HCT116 (cell line): ENCODE measurements at regions of chr2 and their contacts with region 1.

Region 1: DNA sequence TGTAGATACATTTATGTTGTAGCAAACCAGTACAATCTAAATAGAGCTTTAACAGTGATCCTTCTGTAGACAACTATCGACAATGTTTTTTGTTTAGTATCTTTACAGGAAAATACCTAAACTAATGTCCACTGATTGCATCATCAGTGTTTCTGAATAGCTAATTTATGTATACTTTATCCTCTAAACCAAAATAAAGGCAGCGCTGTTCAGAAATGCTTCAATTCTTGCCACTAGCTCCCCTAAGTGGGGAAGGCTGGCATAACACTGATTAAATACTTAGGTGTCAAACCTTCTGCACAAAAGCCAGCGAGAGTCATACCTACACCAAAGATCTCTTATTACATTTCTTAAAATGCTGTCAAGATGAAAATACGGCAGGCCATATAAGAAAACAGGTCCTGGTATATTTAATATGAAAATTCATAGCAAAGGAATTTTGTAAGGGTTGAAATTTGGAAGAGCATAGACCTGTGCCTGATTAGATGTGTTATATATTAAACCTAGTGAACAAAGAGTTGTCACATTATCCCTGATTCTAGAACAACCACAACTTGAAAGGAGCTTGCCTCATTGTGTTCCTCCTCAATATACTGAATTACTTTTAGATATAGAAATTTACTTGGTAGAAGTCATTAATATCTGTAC is 1693.4 kb upstream of the SLC39A10 start:
- DNase-seq: peak; percentile 36
- ATAC-seq: peak; percentile 84
- H3K4me3 ChIP-seq: no peak overlapping the region
- H3K27ac ChIP-seq: no peak overlapping the region
- H3K4me1 ChIP-seq: no peaks in the 10 kb centered on the region; a peak in 1 of 4 replicates
- H3K27me3 ChIP-seq: no peaks in the 10 kb centered on the region
- CTCF ChIP-seq: peak; percentile 61 to 77 (median 67)
- POLR2A ChIP-seq: no peak
- RAD21 ChIP-seq: peak; percentile 80

Region 2: DNA sequence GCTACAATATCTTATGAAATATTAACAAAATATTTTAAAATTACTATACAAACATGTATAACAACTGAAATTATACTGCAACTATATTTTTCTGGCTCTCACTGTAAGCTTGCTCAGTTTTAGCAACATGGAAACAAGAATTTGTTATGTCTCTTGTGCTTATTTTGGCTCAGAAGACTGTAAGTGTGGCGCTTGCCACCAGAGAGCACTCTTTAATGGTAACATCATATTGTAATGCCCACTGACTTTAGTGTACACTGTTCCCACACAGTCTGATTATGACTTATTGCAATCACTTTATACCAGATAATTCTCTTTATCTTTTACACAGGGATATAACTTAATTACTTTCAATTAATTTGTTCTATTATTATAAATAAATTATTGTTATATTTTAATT is 268.2 kb before region 1 on chr2:
- CTCF ChIA-PET with region 1: interaction called, 22 read pairs
- POLR2A ChIA-PET with region 1: no interaction called
- RAD21 ChIA-PET with region 1: no interaction called
- intact Hi-C with region 1: loop called (anchors 1 kb)
- DNase-seq: peak; percentile 22
- ATAC-seq: peak; percentile 86
- H3K4me3 ChIP-seq: no peak overlapping the region
- H3K27ac ChIP-seq: no peak overlapping the region
- H3K4me1 ChIP-seq: no peaks in the 10 kb centered on the region
- H3K27me3 ChIP-seq: no peaks in the 10 kb centered on the region
- CTCF ChIP-seq: peak; percentile 39 to 65 (median 55); a peak in 5 of 6 replicates
- POLR2A ChIP-seq: no peak
- RAD21 ChIP-seq: peak; percentile 68

Region 3: GRCh38 chr2:193895226-193895625 is 68.4 kb before region 1 on chr2:
- CTCF ChIA-PET with region 1: no interaction called
- POLR2A ChIA-PET with region 1: no interaction called
- RAD21 ChIA-PET with region 1: no interaction called
- intact Hi-C with region 1: no loop called
- DNase-seq: no peak
- ATAC-seq: no peak
- H3K4me3 ChIP-seq: no peak overlapping the region
- H3K27ac ChIP-seq: no peak overlapping the region
- H3K4me1 ChIP-seq: no peaks in the 10 kb centered on the region
- H3K27me3 ChIP-seq: no peaks in the 10 kb centered on the region
- CTCF ChIP-seq: no peak
- POLR2A ChIP-seq: no peak
- RAD21 ChIP-seq: no peak

Region 4: DNA sequence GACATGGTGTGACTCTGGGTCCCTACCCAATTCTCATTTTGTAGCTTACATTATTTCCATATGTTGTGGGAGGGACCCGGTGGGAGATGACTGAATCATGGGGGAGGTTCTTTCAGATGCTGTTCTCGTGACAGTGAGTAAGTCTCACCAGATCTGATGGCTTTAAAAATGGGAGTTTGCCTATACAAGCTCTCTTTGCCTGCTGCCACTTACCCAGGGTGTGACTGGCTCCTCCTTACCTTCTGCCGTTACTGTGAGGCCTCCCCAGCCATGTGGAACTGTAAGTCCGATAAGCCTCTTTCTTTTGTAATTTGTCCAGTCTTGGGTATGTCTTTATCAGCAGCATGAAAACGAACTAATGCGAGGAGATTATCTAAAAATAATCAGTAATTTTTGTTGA is 10.2 kb after region 1 on chr2:
- CTCF ChIA-PET with region 1: no interaction called
- POLR2A ChIA-PET with region 1: no interaction called
- RAD21 ChIA-PET with region 1: no interaction called
- intact Hi-C with region 1: no loop called
- DNase-seq: no peak
- ATAC-seq: no peak
- H3K4me3 ChIP-seq: no peak overlapping the region
- H3K27ac ChIP-seq: no peak overlapping the region
- H3K4me1 ChIP-seq: no peaks in the 10 kb centered on the region
- H3K27me3 ChIP-seq: no peaks in the 10 kb centered on the region
- CTCF ChIP-seq: no peak
- POLR2A ChIP-seq: no peak
- RAD21 ChIP-seq: no peak

Region 5: DNA sequence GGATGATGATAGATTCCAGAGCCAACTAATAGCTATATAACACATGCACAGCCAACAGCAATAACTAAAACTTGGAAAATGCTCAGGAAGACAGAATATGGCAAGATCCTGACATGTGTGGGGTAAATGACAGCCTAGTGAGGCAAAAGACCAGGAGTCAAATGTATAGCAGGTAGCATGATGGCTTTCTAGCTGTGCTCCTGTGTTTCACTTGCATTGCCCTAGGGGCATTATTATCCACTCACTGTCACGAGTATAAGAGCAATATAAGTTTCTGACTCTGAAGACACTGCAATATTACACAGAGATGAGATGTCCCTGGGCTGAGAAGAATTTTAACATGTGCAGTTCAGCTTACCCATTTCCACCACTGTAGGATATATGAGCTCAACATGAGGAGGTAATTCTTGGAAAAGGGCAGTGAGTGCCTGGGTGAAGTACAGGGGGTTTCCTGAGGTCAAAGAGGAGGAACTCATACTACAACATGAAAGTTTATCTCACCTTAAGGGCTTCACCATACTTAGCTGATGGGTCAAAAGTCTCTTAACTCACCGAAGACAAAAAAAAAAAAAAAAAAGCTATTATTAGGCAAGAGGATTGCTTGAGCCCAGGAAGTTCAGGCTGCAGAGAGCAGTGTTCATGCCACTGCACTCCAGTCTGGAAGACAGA is 307.8 kb after region 1 on chr2:
- CTCF ChIA-PET with region 1: no interaction called
- POLR2A ChIA-PET with region 1: no interaction called
- RAD21 ChIA-PET with region 1: no interaction called
- intact Hi-C with region 1: no loop called
- DNase-seq: no peak
- ATAC-seq: no peak
- H3K4me3 ChIP-seq: no peak overlapping the region
- H3K27ac ChIP-seq: no peak overlapping the region
- H3K4me1 ChIP-seq: no peaks in the 10 kb centered on the region
- H3K27me3 ChIP-seq: no peaks in the 10 kb centered on the region
- CTCF ChIP-seq: no peak
- POLR2A ChIP-seq: no peak
- RAD21 ChIP-seq: no peak

Region 6: DNA sequence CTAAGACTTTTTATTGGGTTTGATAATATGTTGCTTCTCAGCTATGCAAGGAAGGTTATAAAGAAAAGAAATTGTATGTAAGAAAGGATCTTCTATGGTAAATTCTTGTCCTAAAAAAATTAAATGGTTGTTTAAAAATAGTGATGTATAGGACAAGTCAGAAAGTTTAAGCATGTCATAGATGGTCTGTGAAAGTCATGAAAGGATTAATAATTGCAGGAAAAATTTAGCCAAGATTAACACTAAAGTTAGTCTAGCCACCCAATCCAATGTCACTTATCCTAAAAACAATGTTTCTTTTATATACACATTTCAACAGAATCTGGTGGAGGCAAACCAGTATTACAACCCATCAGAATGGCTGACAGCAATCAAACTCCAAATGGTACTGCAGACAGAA is 646.7 kb after region 1 on chr2:
- CTCF ChIA-PET with region 1: no interaction called
- POLR2A ChIA-PET with region 1: no interaction called
- RAD21 ChIA-PET with region 1: no interaction called
- intact Hi-C with region 1: no loop called
- DNase-seq: no peak
- ATAC-seq: no peak
- H3K4me3 ChIP-seq: no peak overlapping the region
- H3K27ac ChIP-seq: no peak overlapping the region
- H3K4me1 ChIP-seq: no peaks in the 10 kb centered on the region
- H3K27me3 ChIP-seq: no peaks in the 10 kb centered on the region
- CTCF ChIP-seq: no peak
- POLR2A ChIP-seq: no peak
- RAD21 ChIP-seq: no peak